ENCODE measurements at regions of chr10 and their contacts with region 1.

Region 1: DNA sequence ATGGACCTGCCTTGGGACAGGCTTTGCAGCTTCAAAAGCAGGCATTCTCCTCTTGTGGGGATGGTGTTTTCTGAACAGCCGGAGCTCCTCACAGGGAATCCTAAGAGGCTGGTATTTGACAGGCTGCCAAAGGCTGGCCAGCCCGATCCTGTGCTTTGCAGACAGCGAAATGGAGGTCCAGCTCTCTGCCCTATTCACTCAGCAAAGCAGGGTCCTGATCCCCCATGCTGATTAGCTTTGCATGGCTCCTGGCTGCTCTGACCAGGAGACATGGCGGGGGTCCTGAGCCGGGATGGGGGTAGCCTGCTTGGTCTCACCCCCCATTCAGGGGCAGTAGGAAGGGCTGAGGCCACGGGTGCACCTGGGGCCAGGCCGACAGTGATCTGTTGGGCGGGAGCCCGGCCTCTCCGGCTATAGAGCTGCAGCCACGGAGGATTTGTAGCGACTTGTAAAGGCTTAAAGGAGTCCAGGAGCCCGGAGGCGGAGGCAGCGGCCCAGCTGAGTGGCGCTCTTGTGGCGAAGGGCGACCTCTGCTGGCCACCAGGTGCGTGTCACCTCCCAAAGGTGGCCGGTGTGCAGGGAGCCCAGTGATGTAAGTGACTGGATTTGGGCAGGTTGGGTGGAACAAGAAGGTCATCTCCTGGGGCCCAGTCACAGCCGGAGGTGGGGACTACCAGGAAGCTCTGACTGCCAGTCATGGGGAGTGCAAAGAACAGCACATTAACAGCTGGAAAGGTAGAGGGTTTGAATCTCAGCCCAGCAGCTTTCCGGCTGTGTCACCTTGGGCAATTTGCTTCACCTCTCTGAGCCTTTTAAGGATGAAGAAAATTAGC is 126.5 kb downstream of the ZMIZ1 start:
- DNase-seq: peak; percentile 69
- H3K4me3 Mint-ChIP-seq: no peak overlapping the region
- H3K27ac Mint-ChIP-seq: no peak overlapping the region
- H3K4me1 Mint-ChIP-seq: peaks cover 3% of the 10 kb centered on the region
- H3K27me3 Mint-ChIP-seq: no peaks in the 10 kb centered on the region

Region 2: GRCh38 chr10:78047314-78047891 is 1147.9 kb before region 1 on chr10:
- intact Hi-C with region 1: loop called (anchors 1 kb)
- DNase-seq: peak; percentile 68
- H3K4me3 Mint-ChIP-seq: no peak overlapping the region
- H3K27ac Mint-ChIP-seq: no peak overlapping the region
- H3K4me1 Mint-ChIP-seq: peaks cover 10% of the 10 kb centered on the region
- H3K27me3 Mint-ChIP-seq: no peaks in the 10 kb centered on the region

Region 3: DNA sequence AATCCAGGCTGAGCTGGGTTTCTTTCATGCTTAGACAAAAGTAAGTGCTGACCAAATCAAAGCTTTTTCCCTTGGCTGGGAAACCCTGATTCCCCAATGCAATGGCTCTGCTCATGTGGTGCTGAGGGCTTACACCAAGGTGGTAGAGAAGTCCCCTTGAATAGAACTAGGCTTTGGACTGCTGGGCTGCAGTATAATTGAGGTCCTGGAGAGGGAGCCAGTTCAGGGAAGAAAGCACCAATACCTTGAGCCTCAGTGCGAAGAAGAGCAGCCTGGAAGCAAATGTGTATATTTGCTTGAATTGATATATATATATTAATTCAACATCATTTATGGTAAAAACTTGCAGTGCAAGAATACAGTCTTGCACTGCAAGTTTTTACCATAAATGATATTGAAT is 770.6 kb before region 1 on chr10:
- intact Hi-C with region 1: loop called (anchors 10 kb)
- DNase-seq: no peak
- H3K4me3 Mint-ChIP-seq: no peak overlapping the region
- H3K27ac Mint-ChIP-seq: no peak overlapping the region
- H3K4me1 Mint-ChIP-seq: no peaks in the 10 kb centered on the region
- H3K27me3 Mint-ChIP-seq: peaks cover 22% of the 10 kb centered on the region

Region 4: GRCh38 chr10:78658645-78659597 is 536.4 kb before region 1 on chr10:
- intact Hi-C with region 1: loop called (anchors 2 kb)
- DNase-seq: no peak
- H3K4me3 Mint-ChIP-seq: no peak overlapping the region
- H3K27ac Mint-ChIP-seq: no peak overlapping the region
- H3K4me1 Mint-ChIP-seq: no peaks in the 10 kb centered on the region
- H3K27me3 Mint-ChIP-seq: peaks cover 9% of the 10 kb centered on the region

Region 5: GRCh38 chr10:78852466-78853240 is 342.7 kb before region 1 on chr10:
- intact Hi-C with region 1: loop called (anchors 2 kb)
- DNase-seq: no peak
- H3K4me3 Mint-ChIP-seq: no peak overlapping the region
- H3K27ac Mint-ChIP-seq: no peak overlapping the region
- H3K4me1 Mint-ChIP-seq: no peaks in the 10 kb centered on the region
- H3K27me3 Mint-ChIP-seq: no peaks in the 10 kb centered on the region

Region 6: GRCh38 chr10:78931321-78932053 is 263.8 kb before region 1 on chr10:
- intact Hi-C with region 1: loop called (anchors 10 kb)
- DNase-seq: no peak
- H3K4me3 Mint-ChIP-seq: no peak overlapping the region
- H3K27ac Mint-ChIP-seq: no peak overlapping the region
- H3K4me1 Mint-ChIP-seq: no peaks in the 10 kb centered on the region
- H3K27me3 Mint-ChIP-seq: no peaks in the 10 kb centered on the region

Region 7: DNA sequence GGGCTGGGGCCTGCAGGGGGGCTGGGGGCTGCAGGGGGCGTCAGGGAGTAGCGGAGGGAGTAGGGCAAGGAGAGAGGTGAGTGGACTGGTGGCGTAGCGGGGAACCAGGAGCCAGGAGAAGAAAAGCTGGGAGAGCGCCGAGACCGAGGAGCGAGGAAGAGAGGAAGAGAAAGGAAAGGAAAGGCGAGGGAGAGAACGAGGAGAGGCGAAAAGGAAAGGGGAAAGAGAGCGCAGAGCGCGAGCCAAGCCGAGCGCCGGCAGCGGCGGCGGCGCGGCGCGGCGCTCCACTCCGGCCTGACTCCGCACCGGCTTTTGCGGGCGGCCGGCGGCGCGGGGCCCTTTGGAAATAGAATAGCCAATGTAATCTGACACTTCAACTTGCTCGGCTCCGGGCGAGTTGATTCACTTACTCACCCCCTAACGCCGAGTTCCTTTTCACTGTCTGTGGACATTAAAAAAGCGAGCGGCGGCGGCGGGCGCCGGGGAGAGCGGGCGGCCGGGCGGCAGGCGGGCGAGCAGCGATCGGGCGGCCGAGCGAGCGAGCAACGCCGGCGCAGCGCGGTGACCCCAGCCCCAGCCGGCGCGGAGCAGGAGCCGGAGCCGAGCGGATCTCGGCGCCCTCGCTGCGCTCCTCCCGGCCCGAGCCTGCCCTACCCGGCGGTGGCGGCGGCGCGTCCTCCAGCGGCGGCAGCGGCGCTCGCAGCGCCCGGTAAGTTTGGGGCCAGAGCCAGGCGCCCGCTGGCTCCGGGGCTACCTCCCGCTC is 126.6 kb before region 1 on chr10 and contains the start of gene ZMIZ1:
- intact Hi-C with region 1: loop called (anchors 10 kb)
- DNase-seq: peak; percentile 81
- H3K4me3 Mint-ChIP-seq: peak within 1 kb of the TSS; percentile 86
- H3K27ac Mint-ChIP-seq: peak within 1 kb of the TSS; percentile 80
- H3K4me1 Mint-ChIP-seq: peaks cover 29% of the 10 kb centered on the region
- H3K27me3 Mint-ChIP-seq: peaks cover 13% of the 10 kb centered on the region
- total RNA-seq, gene ZMIZ1: 79.2 and 80.4 TPM in 2 replicates

Region 8: GRCh38 chr10:79343121-79343561 is 147.8 kb after region 1 on chr10:
- intact Hi-C with region 1: no loop called
- DNase-seq: no peak
- H3K4me3 Mint-ChIP-seq: no peak overlapping the region
- H3K27ac Mint-ChIP-seq: no peak overlapping the region
- H3K4me1 Mint-ChIP-seq: peaks cover 19% of the 10 kb centered on the region
- H3K27me3 Mint-ChIP-seq: no peaks in the 10 kb centered on the region